ENCODE measurements at regions of chr16 and their contacts with region 1.

Region 1: DNA sequence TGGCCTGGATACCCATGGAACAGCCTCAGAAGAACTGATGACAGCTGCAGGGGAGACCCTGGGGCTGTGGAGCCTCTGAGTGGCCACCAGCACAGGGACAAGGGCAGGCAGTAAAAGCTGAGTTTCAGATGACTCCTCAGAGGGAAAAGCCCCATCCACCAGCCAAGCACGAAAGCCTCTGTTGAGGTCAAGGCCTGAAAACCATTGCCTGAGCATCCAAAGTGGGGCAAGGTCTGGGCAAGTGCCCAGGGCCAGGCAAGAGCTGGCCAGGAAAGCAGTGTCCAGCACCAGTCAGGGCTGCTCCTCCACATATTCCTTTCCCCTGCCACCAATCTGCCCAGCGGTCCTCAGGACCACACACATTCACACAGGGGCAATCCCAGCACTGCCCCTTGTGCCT is 16.4 kb downstream of the ATP6V0D1 start:
- DNase-seq: no peak
- H3K4me3 ChIP-seq: no peak overlapping the region
- H3K27me3 ChIP-seq: no peaks in the 10 kb centered on the region
- CTCF ChIP-seq: no peak

Region 2: GRCh38 chr16:67104061-67104460 is 360.5 kb before region 1 on chr16:
- CTCF ChIA-PET with region 1: no interaction called
- POLR2A ChIA-PET with region 1: no interaction called
- DNase-seq: no peak
- H3K4me3 ChIP-seq: no peak overlapping the region
- H3K27me3 ChIP-seq: no peaks in the 10 kb centered on the region
- CTCF ChIP-seq: peak; percentile 45

Region 3: DNA sequence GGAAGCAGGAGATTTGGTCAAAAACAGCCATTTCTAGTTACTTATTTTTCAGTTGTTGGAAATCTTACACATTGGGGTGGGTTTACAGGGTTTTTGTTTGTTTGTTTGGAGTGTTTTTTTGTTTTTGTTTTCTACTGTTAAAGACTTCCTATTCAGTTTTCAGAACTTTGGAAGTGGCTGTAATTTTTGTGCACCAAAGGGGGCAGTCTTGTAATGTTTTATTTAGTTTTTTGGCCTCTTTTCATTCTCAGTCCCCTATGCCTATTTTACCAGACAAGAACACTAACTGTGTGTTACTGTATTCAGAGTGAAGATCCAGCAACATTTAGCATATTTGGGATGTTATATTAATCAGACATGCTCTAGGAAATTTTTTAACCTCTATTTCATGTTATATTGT is 91.9 kb before region 1 on chr16:
- CTCF ChIA-PET with region 1: interaction called, 10 read pairs
- POLR2A ChIA-PET with region 1: no interaction called
- DNase-seq: no peak
- H3K4me3 ChIP-seq: no peak overlapping the region
- H3K27me3 ChIP-seq: peaks cover 6% of the 10 kb centered on the region
- CTCF ChIP-seq: peak; percentile 51; the same call in 1 of the 2 replicates

Region 4: GRCh38 chr16:67415872-67416793 is 48.4 kb before region 1 on chr16 and contains the start of gene ZDHHC1:
- CTCF ChIA-PET with region 1: interaction called, 276 read pairs
- POLR2A ChIA-PET with region 1: no interaction called
- DNase-seq: no peak
- H3K4me3 ChIP-seq: peak within 1 kb of the TSS; percentile 77
- H3K27me3 ChIP-seq: no peaks in the 10 kb centered on the region; the same call in 1 of the 2 replicates
- CTCF ChIP-seq: 0 out of 2 replicates have a peak, but pooled peaks have one; percentile 27
- polyA plus RNA-seq, gene ZDHHC1: 3.5 and 7.4 TPM in 2 replicates

Region 5: DNA sequence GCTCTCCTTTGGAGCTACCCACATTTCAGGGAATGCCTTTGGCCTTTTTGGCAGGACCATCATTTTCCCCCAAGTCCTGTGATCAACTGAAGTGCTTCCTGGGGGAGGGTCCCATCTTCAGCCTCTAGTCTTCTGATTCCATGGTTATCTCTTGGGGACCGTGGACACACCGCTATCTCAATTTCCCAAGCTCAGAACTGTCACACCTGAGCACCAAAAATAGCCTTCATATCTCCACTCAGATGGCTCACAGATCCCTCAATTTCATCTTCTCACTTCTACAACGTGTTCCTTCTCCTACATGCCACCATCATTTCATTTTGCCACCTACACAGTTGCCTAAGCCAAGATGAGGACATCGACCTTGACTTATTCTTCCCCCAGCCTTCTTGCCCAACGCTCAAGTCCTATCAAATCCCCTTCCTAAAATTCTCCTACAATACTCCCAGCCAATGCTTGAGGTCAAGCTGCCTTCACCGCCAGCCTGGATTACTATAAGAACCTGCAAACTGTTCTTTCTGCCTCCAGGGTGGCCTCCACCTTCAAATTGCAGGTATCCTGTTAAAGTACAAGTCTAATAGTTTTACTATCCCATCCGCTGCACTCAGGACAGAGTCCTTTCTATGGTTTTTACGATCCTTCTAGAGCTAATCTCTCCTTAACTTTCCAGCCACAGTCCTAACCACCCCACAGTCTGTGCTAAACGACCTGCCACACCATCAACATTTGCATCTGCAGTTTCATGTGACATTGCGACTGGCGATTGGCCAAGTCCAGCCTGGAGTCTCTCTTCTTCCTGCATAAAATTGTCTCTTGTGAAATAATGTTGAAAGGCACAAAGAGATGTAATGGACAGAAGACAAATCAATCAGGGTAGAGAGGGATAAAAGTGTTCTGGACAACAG is 10.2 kb after region 1 on chr16:
- CTCF ChIA-PET with region 1: interaction called, 16 read pairs
- POLR2A ChIA-PET with region 1: no interaction called
- DNase-seq: no peak
- H3K4me3 ChIP-seq: no peak overlapping the region
- H3K27me3 ChIP-seq: no peaks in the 10 kb centered on the region
- CTCF ChIP-seq: no peak

Region 6: DNA sequence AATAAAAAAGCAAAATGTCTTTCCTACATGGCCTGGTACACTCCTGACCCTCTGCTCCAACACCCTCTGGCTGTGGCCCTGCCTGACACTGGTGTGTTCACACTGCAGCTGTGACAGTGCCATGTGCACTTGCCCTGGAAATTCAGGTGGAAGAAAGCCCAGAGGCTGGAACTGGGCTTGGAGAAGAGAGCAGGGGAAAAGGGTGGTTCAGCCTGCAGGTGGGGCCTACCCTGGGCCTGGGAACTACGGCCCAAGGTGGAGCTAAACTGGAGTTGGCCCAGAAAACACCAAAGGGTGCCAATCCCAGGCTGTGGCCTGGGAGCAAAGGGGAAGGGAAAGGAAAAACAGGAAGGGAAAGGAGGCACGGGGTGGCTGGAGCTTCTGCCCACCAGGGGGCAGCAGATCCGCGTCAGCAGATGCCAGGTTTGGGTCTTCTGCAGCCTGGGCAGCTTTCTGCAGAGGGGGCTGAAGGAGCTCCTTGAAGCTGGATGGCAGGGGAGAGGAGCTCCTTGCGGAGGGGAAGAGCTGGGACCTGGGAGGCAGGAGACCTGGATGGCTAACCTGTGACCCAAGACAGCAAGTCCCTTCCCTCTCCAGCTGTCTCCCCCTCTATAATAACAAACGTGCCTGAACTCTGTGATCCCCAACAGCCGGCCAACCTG is 82.3 kb after region 1 on chr16:
- CTCF ChIA-PET with region 1: no interaction called
- POLR2A ChIA-PET with region 1: no interaction called
- DNase-seq: no peak
- H3K4me3 ChIP-seq: no peak overlapping the region
- H3K27me3 ChIP-seq: no peaks in the 10 kb centered on the region
- CTCF ChIP-seq: peak; percentile 95